Vagina (tissue), 2 donors: ENCODE measurements at regions of chr9 and their contacts with region 1.

Region 1: DNA sequence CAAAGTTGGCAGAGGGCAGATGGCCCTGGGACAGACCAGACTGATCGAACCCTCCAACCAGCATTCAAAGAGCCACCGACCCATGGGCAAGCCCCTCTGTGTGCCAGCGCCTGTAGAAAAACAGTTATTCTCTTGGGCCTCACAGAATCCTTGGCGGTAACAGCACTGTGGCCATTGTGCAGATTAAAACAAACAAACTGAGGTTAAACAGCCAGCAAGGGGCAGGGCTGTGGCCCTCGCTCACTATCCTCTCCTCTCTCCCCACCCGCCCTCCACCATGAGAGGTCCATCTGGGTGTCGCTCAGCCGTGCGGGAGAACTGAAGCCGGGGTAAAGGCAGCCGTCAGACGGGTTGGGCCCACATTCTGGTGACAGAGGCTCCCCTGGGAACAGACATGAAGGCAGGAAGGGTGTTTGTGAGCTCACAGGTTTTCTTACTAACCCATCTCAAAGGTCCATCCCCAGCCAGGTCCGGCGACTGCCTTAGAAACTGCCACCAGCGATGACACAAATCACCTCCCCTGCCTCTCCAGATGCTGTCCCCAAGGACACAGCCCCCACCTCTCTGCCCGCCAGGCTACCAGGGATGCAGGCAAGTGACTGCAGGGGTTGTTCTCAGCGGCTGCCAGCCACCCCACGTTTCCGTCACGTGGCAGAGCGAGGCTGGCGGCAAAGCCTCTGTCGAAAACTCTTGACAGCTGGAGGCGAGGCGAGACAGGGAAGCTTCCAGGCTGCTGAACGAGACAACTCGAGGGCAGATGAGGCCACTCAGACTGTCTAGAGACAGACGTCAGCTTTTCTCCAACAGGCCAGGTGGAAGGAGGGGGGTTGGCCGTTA is 75.8 kb upstream of the SARDH start:
- DNase-seq: no peak
- H3K4me3 ChIP-seq: no peak overlapping the region
- H3K27ac ChIP-seq: no peak overlapping the region
- H3K4me1 ChIP-seq: no peaks in the 10 kb centered on the region
- H3K27me3 ChIP-seq: no peaks in the 10 kb centered on the region
- CTCF ChIP-seq: no peak
- POLR2A ChIP-seq: no peak

Region 2: GRCh38 chr9:133771486-133772482 is 42.2 kb before region 1 on chr9:
- intact Hi-C with region 1: loop called (anchors 1 kb)
- DNase-seq: peak; percentile 40 to 91
- H3K4me3 ChIP-seq: no peak overlapping the region
- H3K27ac ChIP-seq: no peak overlapping the region
- H3K4me1 ChIP-seq: no peaks in the 10 kb centered on the region
- H3K27me3 ChIP-seq: no peaks in the 10 kb centered on the region
- CTCF ChIP-seq: no peak
- POLR2A ChIP-seq: no peak

Region 3: DNA sequence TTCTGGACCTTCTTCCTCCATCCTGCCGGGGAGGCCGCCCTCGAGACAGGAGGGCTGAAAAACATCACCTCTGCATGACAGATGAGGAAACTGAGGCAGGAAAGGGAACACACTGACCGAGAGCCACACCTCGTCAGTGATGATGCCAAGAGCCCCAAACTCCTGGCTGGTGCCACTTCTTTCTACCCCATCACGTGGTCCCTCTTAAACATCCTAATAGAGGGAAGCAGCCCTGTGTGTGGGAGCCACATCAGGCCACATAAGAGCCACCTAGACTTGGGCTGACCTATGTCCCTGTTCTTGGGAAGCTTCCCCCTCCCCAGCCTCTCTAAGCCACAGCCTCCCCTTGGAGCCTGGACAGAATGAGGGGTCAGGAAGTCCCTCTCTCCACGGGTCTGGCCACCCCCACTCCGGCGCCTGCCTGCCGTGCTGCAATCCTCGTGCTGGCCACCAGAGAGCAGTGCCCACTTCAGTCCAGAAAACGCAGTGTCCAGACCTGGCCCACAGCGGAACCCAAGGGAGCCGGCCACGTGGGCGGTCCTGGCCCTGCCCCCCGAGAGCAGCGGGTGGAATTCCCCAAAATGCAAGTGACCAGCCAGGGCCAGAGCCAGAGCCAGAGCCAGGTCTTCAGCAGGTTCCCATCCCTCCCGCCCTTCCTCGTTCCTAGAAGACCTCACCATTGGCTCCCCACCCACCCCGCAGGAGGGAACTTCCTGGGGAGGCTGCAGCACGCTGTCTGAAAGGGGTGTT is 21.1 kb before region 1 on chr9:
- intact Hi-C with region 1: no loop called
- DNase-seq: no peak
- H3K4me3 ChIP-seq: no peak overlapping the region
- H3K27ac ChIP-seq: no peak overlapping the region
- H3K4me1 ChIP-seq: peaks cover 9% of the 10 kb centered on the region
- H3K27me3 ChIP-seq: no peaks in the 10 kb centered on the region
- CTCF ChIP-seq: peak; percentile 86 to 97 (median 94)
- POLR2A ChIP-seq: no peak

Region 4: GRCh38 chr9:133839822-133840329 is 25.9 kb after region 1 on chr9:
- intact Hi-C with region 1: no loop called
- DNase-seq: no peak
- H3K4me3 ChIP-seq: no peak overlapping the region
- H3K27ac ChIP-seq: no peak overlapping the region
- H3K4me1 ChIP-seq: peaks cover 16% of the 10 kb centered on the region
- H3K27me3 ChIP-seq: no peaks in the 10 kb centered on the region
- CTCF ChIP-seq: no peak
- POLR2A ChIP-seq: no peak